ENCODE measurements at regions of chr1 and their contacts with region 1.

Region 1: GRCh38 chr1:38173157-38173831 is 126.7 kb upstream of the POU3F1 start:
- DNase-seq: peak; percentile 86
- ATAC-seq: peak; percentile 90
- H3K4me3 ChIP-seq: 0 out of 2 replicates have a peak overlapping the region, but pooled peaks have one; percentile 1
- H3K27ac ChIP-seq: peak overlapping the region; percentile 93
- H3K4me1 ChIP-seq: peaks cover 30% of the 10 kb centered on the region
- H3K27me3 ChIP-seq: no peaks in the 10 kb centered on the region
- CTCF ChIP-seq: no peak
- EP300 ChIP-seq: peak in 1 of 2 experiments; percentile 62; a peak in 2 of 4 replicates
- POLR2A ChIP-seq: no peak
- RAD21 ChIP-seq: 0 out of 2 replicates have a peak, but pooled peaks have one; percentile 8

Region 2: DNA sequence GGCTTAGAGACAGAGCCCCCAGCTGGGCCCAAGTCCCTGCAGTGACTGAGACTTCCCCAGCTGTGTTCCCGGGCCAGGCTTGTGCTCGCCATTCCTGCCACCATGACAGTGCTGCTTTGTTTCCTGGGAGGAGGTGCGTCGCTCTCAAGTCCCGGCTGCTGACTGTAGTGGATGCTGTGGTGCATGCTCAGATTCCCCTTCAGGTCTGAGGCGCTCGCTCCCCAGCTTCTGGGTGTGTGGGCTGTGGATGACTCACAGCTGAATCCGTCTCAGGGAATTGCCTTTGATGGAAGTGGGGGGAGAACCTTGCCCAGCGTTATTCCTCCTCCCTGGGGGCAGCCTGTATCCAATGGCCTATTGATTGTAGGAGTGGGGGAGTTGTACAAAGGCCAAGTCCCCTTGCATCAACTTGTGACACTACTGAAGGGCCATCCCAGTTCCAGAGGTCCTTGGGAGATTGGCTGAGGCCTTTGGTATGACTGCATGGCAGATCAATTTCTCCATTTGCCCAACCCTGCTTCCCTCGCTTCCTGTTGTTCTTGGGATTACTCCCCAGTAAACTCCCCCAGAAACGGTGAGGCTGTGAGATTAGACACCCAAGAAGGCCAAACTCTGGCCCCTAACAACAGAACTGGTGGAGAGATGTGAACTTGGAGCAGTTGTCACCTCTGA is 108.9 kb before region 1 on chr1:
- CTCF ChIA-PET with region 1: no interaction called
- POLR2A ChIA-PET with region 1: interaction called, 3 read pairs
- RAD21 ChIA-PET with region 1: interaction called, 14 read pairs
- SMC1A ChIA-PET with region 1: interaction called, 10 read pairs
- in situ Hi-C with region 1: no loop called
- intact Hi-C with region 1: loop called (anchors 5 kb)
- DNase-seq: no peak
- ATAC-seq: no peak
- H3K4me3 ChIP-seq: no peak overlapping the region
- H3K27ac ChIP-seq: no peak overlapping the region
- H3K4me1 ChIP-seq: peaks cover 15% of the 10 kb centered on the region
- H3K27me3 ChIP-seq: no peaks in the 10 kb centered on the region
- CTCF ChIP-seq: no peak
- EP300 ChIP-seq: no peak
- POLR2A ChIP-seq: no peak
- RAD21 ChIP-seq: no peak

Region 3: DNA sequence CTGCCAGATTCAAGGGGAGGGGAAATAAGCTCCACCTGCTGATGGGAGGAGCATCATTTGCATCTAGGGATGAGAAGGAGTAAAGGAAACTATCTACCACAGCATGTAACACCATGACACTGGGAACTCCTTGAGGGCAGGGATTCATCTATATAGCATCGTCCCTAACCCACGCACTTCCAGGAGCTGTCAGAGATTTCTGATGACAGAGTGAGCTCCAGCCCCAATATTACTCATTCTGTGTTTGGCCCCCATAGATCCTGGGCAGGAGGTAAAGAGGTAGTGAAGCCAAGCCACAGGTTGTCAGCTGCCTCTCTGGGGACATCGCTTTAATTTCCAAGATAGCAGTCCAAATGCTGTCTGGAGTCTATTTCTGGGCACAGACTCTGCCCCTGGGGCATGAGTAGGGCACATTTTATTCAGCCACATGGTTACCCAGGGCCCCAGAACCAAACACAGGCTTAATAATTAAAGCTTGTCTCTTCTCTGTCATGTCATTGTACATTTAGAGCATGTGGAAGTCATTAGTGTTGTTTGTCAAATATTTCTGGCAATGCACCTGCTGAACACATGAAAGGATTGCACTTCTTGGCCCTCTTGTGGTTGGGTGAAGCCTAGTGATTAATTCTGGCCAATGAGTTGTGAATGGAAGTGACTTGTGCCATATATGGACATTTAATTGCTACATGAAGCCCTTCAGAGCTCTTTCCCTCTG is 20.8 kb before region 1 on chr1:
- CTCF ChIA-PET with region 1: interaction called, 41 read pairs
- POLR2A ChIA-PET with region 1: interaction called, 29 read pairs
- RAD21 ChIA-PET with region 1: interaction called, 32 read pairs
- SMC1A ChIA-PET with region 1: interaction called, 74 read pairs
- in situ Hi-C with region 1: no loop called
- intact Hi-C with region 1: loop called (anchors 2 kb)
- DNase-seq: peak; percentile 51
- ATAC-seq: peak; percentile 85
- H3K4me3 ChIP-seq: no peak overlapping the region
- H3K27ac ChIP-seq: no peak overlapping the region
- H3K4me1 ChIP-seq: peaks cover 11% of the 10 kb centered on the region
- H3K27me3 ChIP-seq: no peaks in the 10 kb centered on the region
- CTCF ChIP-seq: peak in 2 of 3 experiments; percentile 14 to 22; a peak in 1 of 6 replicates
- EP300 ChIP-seq: no peak
- POLR2A ChIP-seq: no peak
- RAD21 ChIP-seq: no peak

Region 4: GRCh38 chr1:38191461-38191860 is 18.2 kb after region 1 on chr1:
- CTCF ChIA-PET with region 1: interaction called, 3 read pairs
- POLR2A ChIA-PET with region 1: no interaction called
- RAD21 ChIA-PET with region 1: interaction called, 8 read pairs
- SMC1A ChIA-PET with region 1: interaction called, 16 read pairs
- in situ Hi-C with region 1: no loop called
- intact Hi-C with region 1: no loop called
- DNase-seq: no peak
- ATAC-seq: no peak
- H3K4me3 ChIP-seq: no peak overlapping the region
- H3K27ac ChIP-seq: no peak overlapping the region
- H3K4me1 ChIP-seq: peaks cover 4% of the 10 kb centered on the region; the same call in 1 of the 2 replicates
- H3K27me3 ChIP-seq: no peaks in the 10 kb centered on the region; a peak in 2 of 4 replicates
- CTCF ChIP-seq: no peak
- EP300 ChIP-seq: no peak
- POLR2A ChIP-seq: no peak
- RAD21 ChIP-seq: no peak